AG04449 (cell line): ENCODE measurements at regions of chr3 and their contacts with region 1.

Region 1: GRCh38 chr3:134449277-134449676 is 36.5 kb downstream of the ANAPC13 start:
- DNase-seq: no peak
- H3K4me3 ChIP-seq: no peak overlapping the region
- CTCF ChIP-seq: peak; percentile 22

Region 2: DNA sequence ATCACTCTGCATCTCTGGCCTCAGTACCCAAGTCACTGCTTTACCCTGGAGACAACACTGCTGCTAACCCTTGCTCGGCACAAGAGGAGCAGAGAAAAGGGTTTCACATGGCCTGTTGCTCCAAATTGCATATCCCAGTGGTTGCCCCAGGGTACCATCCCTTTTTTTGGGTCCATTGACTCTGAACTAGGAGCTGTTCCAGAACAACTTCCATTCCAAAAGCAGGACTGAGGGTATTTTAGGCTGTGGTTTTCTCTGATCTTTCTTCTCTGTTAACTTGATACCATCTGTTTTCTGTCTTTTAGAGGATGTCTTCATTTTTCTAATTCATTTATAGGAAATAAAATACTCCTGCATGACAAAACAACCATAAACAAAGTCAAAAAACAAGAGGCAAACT is 181.3 kb before region 1 on chr3:
- CTCF ChIA-PET with region 1: no interaction called
- POLR2A ChIA-PET with region 1: no interaction called
- DNase-seq: no peak
- H3K4me3 ChIP-seq: no peak overlapping the region
- CTCF ChIP-seq: no peak

Region 3: DNA sequence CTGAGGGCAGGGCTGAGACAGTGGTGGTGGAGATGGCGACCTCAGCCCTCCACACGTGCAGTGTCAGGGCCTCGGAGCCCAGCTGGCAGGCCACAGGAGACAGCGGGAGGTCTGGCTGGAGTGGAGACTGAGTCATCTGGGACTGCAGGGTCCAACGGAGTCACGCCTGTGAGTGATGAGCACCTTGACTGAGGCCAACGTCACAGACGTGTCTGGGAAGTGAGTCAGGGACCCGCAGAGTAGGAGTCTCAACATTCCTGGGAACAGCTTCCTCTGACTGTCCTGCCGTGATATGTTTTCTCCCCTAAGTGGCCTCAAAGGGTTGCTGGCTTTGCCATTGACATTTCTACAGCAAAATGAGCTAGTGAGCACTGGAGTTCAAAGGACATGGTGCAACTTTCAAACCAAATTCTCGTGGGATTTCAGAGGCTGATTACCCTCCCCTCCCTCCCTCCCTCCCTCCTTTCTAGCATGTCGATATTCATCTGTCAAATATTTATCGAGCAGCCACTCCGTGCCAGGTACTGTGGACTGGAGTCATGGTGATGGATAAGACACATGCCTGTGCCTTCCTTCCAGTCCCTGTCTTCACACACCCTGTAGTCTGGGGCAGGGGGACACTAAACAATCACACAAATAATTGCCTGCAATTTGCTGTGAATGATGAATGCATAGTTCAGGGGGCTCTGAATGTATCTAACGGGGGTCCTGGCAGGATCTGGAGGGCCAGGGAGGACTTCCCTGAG is 21.7 kb before region 1 on chr3:
- CTCF ChIA-PET with region 1: interaction called, 14 read pairs
- POLR2A ChIA-PET with region 1: interaction called, 3 read pairs
- DNase-seq: peak; percentile 99
- H3K4me3 ChIP-seq: no peak overlapping the region
- CTCF ChIP-seq: no peak

Region 4: DNA sequence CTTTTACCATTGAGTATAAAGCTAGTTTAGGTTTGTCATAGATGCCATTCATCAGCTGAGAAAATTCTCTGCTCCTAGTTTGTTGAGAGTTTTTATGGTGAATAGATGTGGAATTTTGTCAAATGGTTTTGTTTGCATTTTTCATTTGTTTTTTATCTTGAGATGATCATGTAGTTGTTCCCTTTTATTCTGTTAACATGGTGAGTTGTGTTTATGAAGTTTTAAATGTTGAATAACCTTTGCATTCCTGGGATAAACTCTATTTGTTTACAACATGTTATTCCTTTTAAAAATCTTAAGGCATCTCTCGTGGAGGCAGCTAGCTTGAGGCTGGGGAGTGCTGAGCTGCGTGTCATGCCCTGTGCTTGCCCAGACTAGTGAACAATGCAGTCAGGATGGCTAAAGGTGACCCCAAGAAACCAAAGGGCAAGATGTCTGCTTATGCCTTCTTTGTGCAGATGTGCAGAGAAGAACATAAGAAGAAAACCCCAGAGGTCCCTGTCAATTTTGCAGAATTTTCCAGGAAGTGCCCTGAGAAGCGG is 12.0 kb before region 1 on chr3:
- CTCF ChIA-PET with region 1: interaction called, 13 read pairs
- POLR2A ChIA-PET with region 1: interaction called, 3 read pairs
- DNase-seq: no peak
- H3K4me3 ChIP-seq: no peak overlapping the region
- CTCF ChIP-seq: no peak

Region 5: GRCh38 chr3:134640872-134641470 is 191.7 kb after region 1 on chr3:
- CTCF ChIA-PET with region 1: no interaction called
- POLR2A ChIA-PET with region 1: no interaction called
- DNase-seq: no peak
- H3K4me3 ChIP-seq: no peak overlapping the region
- CTCF ChIP-seq: peak; percentile 69